GM13977 (cell line): ENCODE measurements at regions of chr20 and their contacts with region 1.

Region 1: GRCh38 chr20:54103067-54103761 is 32.8 kb upstream of the BCAS1 start:
- DNase-seq: peak; percentile 55
- CTCF ChIP-seq: peak; percentile 91

Region 2: GRCh38 chr20:54207743-54208547 is 104.7 kb after region 1 on chr20 and contains the start of gene PFDN4:
- in situ Hi-C with region 1: loop called (anchors 10 kb)
- DNase-seq: peak; percentile 94
- CTCF ChIP-seq: peak; percentile 97

Region 3: DNA sequence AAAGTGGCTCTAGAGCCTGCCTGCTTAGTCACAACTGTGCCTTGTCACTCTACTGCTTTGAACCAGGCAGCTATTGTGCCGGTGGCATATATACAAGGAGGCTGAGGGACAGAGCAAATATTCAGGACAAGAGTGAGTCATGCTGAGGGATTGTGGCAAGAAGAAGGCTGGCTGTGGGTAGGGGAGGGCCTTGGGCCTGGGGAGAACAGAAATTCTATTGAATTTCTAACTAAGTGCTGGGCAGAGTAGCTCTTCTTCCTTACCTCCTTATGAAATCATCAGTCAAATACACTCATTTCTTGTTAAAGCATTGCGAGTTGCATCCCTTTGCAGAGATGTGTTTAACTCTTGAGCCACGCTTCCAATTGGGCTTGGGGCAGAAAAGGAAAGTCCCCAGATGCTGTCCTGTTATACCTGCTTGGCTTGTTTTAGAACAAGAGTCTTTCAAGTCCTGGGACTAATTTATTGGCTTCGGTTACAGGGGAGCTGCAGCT is 164.3 kb after region 1 on chr20:
- in situ Hi-C with region 1: no loop called
- DNase-seq: no peak
- CTCF ChIP-seq: no peak